B cell (primary cell): ENCODE measurements at regions of chr10 and their contacts with region 1.

Region 1: GRCh38 chr10:27312854-27313253 is 72.3 kb upstream of the ACBD5 start:
- DNase-seq: no peak
- ATAC-seq: no peak
- H3K4me3 ChIP-seq: no peak overlapping the region
- H3K4me3 Mint-ChIP-seq: no peak overlapping the region
- H3K27ac ChIP-seq: no peak overlapping the region
- H3K27ac Mint-ChIP-seq: no peak overlapping the region
- H3K4me1 ChIP-seq: no peaks in the 10 kb centered on the region
- H3K4me1 Mint-ChIP-seq: no peaks in the 10 kb centered on the region
- H3K27me3 ChIP-seq: peaks cover 0 to 2% (median 0%) of the 10 kb centered on the region in 4 experiments
- H3K27me3 Mint-ChIP-seq: peaks cover 6% of the 10 kb centered on the region
- CTCF ChIP-seq: no peak

Region 2: DNA sequence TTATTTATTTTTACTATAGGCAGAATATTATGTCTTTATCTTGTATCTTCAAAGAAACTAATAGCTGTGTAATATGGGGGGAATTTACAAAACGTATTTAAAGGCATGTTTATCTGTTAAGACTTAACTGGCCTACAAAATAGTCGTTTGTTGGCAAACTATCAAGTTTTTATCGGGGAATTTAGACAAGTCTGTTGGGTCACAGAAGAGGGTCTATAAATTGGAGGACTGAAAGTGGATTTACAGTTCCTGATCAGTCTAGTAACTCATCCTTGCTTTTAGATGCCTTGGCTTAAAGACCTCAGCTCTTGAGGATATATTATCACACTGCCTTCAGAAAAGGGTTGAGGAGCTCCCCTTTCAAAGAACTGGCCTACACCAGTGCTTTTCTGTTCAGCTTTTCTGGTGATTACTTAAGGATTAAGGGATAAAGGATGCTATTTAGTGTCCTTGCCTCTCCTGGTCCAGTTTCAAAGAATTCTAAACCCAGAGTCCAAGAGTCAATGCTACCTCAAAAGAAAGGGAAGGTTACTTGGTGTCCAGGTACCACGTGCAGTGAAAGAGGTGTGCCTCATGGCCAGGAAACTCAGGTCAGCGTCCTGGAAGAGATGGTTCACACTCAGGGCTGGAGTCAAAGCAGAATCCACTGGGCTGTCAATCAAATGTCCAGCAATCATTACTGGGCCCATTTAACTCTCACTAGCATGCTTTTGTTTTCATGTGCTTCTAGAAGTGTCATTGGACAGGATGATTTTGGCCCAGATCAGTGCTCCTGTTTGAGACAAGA is 409.2 kb before region 1 on chr10:
- CTCF ChIA-PET with region 1: no interaction called
- POLR2A ChIA-PET with region 1: no interaction called
- intact Hi-C with region 1: loop called (anchors 5 kb)
- DNase-seq: no peak
- ATAC-seq: no peak
- H3K4me3 ChIP-seq: no peak overlapping the region
- H3K4me3 Mint-ChIP-seq: no peak overlapping the region
- H3K27ac ChIP-seq: no peak overlapping the region
- H3K27ac Mint-ChIP-seq: no peak overlapping the region
- H3K4me1 ChIP-seq: no peaks in the 10 kb centered on the region
- H3K4me1 Mint-ChIP-seq: no peaks in the 10 kb centered on the region
- H3K27me3 ChIP-seq: peaks cover 0 to 2% (median 0%) of the 10 kb centered on the region in 4 experiments
- H3K27me3 Mint-ChIP-seq: peaks cover 6% of the 10 kb centered on the region
- CTCF ChIP-seq: no peak